ENCODE measurements at regions of chr9 and their contacts with region 1.

Region 1: GRCh38 chr9:37776328-37776727 is 8.5 kb downstream of the EXOSC3 start:
- DNase-seq: no peak
- ATAC-seq: no peak
- H3K4me3 ChIP-seq: no peak overlapping the region
- H3K27ac ChIP-seq: no peak overlapping the region
- H3K4me1 ChIP-seq: no peaks in the 10 kb centered on the region
- H3K27me3 ChIP-seq: no peaks in the 10 kb centered on the region
- CTCF ChIP-seq: no peak
- POLR2A ChIP-seq: no peak

Region 2: DNA sequence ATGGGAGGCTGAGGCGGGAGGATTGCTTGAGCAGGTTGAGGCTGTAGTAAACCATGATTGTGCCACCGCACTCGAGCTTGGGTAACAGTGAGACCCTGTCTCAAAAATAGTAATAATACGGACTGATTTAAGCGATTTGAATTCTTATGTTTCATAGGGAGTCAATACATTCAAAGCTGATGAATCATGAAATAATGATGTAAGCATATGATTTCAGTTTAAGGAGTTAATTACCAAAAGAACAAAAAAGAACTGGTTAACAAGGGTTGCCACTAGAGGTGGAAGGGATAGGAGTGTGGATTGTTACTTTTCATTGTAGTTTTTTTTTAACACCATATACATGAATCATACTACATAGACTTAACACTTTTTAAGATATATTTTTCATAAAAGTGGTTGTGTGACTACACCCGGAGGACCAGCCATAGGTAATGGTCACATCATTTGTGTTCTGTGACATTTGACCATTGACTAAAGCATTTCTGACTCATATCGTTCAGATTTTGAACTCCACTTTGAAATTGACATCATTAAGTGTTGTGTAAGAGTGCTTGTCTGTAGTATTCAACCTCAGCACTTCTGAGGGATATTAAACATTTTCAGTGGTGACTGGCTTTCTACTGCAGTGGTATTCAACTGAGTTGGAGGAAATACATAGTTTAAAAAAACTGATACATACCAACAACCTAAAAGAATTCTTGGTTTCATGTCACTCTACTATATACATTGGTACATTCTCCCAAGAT is 15.7 kb before region 1 on chr9:
- intact Hi-C with region 1: loop called in 1 of 10 experiments (anchors 2 kb)
- DNase-seq: no peak
- ATAC-seq: no peak
- H3K4me3 ChIP-seq: no peak overlapping the region
- H3K27ac ChIP-seq: no peak overlapping the region
- H3K4me1 ChIP-seq: no peaks in the 10 kb centered on the region
- H3K27me3 ChIP-seq: no peaks in the 10 kb centered on the region
- CTCF ChIP-seq: no peak
- POLR2A ChIP-seq: no peak

Region 3: GRCh38 chr9:37859043-37859442 is 82.7 kb after region 1 on chr9:
- intact Hi-C with region 1: no loop called
- DNase-seq: no peak
- ATAC-seq: no peak
- H3K4me3 ChIP-seq: no peak overlapping the region
- H3K27ac ChIP-seq: no peak overlapping the region
- H3K4me1 ChIP-seq: no peaks in the 10 kb centered on the region
- H3K27me3 ChIP-seq: no peaks in the 10 kb centered on the region
- CTCF ChIP-seq: peak in 1 of 12 donors; percentile 7
- POLR2A ChIP-seq: no peak